ENCODE measurements at regions of chr5 and their contacts with region 1.

Region 1: GRCh38 chr5:96868603-96869371 is 7.5 kb upstream of the ERAP2 start:
- DNase-seq: peak; percentile 42 to 68 (median 59)
- H3K4me3 ChIP-seq: no peak overlapping the region
- H3K4me3 Mint-ChIP-seq: no peak overlapping the region
- H3K27ac ChIP-seq: no peak overlapping the region
- H3K27ac Mint-ChIP-seq: peak overlapping the region in 2 of 7 donors; percentile 0 to 38
- H3K4me1 ChIP-seq: peaks cover 34% of the 10 kb centered on the region
- H3K4me1 Mint-ChIP-seq: peaks cover 29 to 45% (median 33%) of the 10 kb centered on the region in 4 donors
- H3K27me3 ChIP-seq: no peaks in the 10 kb centered on the region
- H3K27me3 Mint-ChIP-seq: peaks cover 0 to 2% of the 10 kb centered on the region in 2 donors

Region 2: GRCh38 chr5:96837303-96837702 is 31.5 kb before region 1 on chr5:
- CTCF ChIA-PET with region 1: no interaction called
- POLR2A ChIA-PET with region 1: no interaction called
- intact Hi-C with region 1: no loop called
- DNase-seq: no peak
- H3K4me3 ChIP-seq: no peak overlapping the region
- H3K4me3 Mint-ChIP-seq: no peak overlapping the region
- H3K27ac ChIP-seq: no peak overlapping the region
- H3K27ac Mint-ChIP-seq: no peak overlapping the region
- H3K4me1 ChIP-seq: no peaks in the 10 kb centered on the region
- H3K4me1 Mint-ChIP-seq: peaks cover 0 to 2% (median under 1%) of the 10 kb centered on the region in 4 donors
- H3K27me3 ChIP-seq: no peaks in the 10 kb centered on the region
- H3K27me3 Mint-ChIP-seq: peaks cover 0 to 1% of the 10 kb centered on the region in 2 donors

Region 3: DNA sequence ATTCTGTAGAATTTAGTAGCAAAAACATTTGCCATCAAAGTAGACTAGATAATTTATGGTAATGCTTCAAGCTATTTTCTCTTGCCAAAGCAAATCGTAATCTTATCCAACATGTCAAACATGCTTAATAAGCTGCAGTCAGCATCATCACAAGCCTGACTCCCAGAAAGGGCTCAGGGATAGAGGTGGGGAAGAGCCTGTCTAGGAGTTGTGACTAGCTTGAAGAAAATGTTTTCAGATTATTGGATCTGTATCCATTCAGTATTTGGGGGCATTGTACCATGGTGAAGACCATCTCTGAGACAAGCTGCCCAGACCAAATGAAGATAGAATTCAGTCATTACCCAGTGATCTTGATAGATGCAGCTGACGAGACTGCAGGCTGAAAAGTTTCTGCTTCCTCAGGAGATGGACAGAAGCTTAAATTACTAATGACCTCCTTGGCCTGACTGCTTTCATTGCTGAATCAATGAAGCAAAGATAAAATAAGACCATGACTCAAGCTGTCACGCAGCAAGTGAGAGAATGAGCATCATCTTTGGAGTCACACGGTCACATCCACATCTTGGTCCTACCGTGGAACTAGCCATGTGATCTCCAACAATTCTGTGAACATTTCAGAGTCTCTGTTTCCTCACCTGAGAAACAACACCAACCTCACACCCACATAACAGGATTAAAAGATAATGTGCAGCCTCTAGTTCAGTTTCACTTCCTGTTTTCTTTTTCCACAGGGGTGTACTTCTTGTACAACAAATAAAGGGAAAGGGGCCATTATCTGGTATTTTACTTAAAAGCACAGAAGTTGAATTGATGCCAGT is 16.9 kb after region 1 on chr5:
- CTCF ChIA-PET with region 1: interaction called, 39 read pairs
- POLR2A ChIA-PET with region 1: interaction called, 6 read pairs
- intact Hi-C with region 1: loop called (anchors 1 kb)
- DNase-seq: peak; percentile 55 to 79 (median 69)
- H3K4me3 ChIP-seq: peak overlapping the region; percentile 8
- H3K4me3 Mint-ChIP-seq: peak overlapping the region; percentile 55 to 85 (median 70)
- H3K27ac ChIP-seq: peak overlapping the region; percentile 43
- H3K27ac Mint-ChIP-seq: peak overlapping the region; percentile 77 to 98 (median 96)
- H3K4me1 ChIP-seq: peaks cover 61% of the 10 kb centered on the region
- H3K4me1 Mint-ChIP-seq: peaks cover 53 to 75% (median 65%) of the 10 kb centered on the region in 4 donors
- H3K27me3 ChIP-seq: no peaks in the 10 kb centered on the region
- H3K27me3 Mint-ChIP-seq: no peaks in the 10 kb centered on the region

Region 4: DNA sequence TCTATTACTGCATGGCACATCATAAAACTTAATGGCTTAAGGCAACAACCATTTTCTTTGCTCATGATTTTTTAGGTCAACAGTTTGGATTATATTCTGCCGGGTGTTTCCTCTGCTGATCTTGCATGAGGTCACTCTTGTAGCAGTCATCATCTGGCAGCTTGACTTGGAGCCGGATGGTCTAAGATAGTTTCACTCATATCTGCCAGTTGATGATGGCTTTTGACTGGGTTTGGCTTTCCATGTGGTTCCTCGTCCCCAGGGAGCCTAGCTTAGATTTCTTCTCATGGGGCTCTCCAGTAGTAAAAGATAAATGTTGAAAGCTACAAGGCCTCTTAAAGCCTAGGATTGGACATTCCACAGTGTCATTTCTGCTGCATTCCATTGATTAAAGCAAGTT is 94.5 kb after region 1 on chr5:
- CTCF ChIA-PET with region 1: interaction called, 12 read pairs
- POLR2A ChIA-PET with region 1: interaction called, 3 read pairs
- intact Hi-C with region 1: no loop called
- DNase-seq: peak in 2 of 5 donors; percentile 19 to 44
- H3K4me3 ChIP-seq: peak overlapping the region in 1 of 2 donors; percentile 29
- H3K4me3 Mint-ChIP-seq: peak overlapping the region; percentile 33 to 89 (median 80)
- H3K27ac ChIP-seq: peak overlapping the region; percentile 45
- H3K27ac Mint-ChIP-seq: peak overlapping the region; percentile 83 to 97 (median 95)
- H3K4me1 ChIP-seq: peaks cover 88% of the 10 kb centered on the region
- H3K4me1 Mint-ChIP-seq: peaks cover 53 to 89% (median 71%) of the 10 kb centered on the region in 4 donors
- H3K27me3 ChIP-seq: no peaks in the 10 kb centered on the region
- H3K27me3 Mint-ChIP-seq: no peaks in the 10 kb centered on the region

Region 5: GRCh38 chr5:97009212-97009898 is 140.6 kb after region 1 on chr5:
- CTCF ChIA-PET with region 1: interaction called, 11 read pairs
- POLR2A ChIA-PET with region 1: no interaction called
- intact Hi-C with region 1: loop called (anchors 2 kb)
- DNase-seq: peak in 4 of 5 donors; percentile 31 to 47 (median 37)
- H3K4me3 ChIP-seq: no peak overlapping the region
- H3K4me3 Mint-ChIP-seq: peak overlapping the region in 5 of 8 donors; percentile 7 to 66 (median 51)
- H3K27ac ChIP-seq: no peak overlapping the region
- H3K27ac Mint-ChIP-seq: peak overlapping the region in 5 of 7 donors; percentile 23 to 87 (median 66)
- H3K4me1 ChIP-seq: peaks cover 24% of the 10 kb centered on the region
- H3K4me1 Mint-ChIP-seq: peaks cover 17 to 32% (median 26%) of the 10 kb centered on the region in 4 donors
- H3K27me3 ChIP-seq: no peaks in the 10 kb centered on the region
- H3K27me3 Mint-ChIP-seq: no peaks in the 10 kb centered on the region

Region 6: DNA sequence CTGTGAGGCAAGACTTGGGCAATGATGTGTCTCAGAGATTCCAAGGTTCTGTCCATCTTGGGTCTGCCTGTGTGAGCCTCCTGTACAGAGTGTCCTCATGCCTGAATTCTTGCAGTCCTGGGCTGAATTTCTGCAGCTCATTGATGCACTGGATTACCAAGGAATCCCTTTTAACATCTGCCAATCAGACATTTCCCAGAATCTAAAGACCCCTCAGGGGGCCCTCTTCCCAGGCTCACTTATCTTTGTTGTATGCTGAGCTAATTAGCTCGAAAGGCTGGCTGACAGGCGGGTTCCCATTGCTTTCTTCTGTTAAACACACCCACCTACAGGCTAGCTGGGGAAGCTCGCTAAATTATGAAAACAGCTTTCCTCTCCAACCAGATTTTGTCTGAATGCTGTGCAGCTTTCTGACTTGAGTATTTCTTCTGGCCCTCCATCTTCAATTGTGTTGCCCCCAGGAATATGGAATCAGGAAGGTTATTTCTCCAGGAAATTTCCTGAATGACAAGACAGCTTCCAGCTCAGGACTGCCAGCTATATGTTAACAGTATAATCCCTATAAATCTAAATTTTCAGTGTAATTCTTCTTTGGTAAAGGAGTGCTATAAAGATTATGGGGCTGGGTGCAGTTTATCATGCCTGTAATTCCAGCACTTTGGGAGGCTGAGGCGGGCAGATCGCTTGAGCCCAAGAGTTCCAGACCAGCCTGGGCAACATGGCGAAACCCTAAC is 273.9 kb after region 1 on chr5 and contains the start of gene LIX1:
- CTCF ChIA-PET with region 1: interaction called, 27 read pairs
- POLR2A ChIA-PET with region 1: no interaction called
- intact Hi-C with region 1: loop called (anchors 1 kb)
- DNase-seq: peak in 4 of 5 donors; percentile 10 to 21 (median 11)
- H3K4me3 ChIP-seq: no peak within 1 kb of the TSS
- H3K4me3 Mint-ChIP-seq: no peak within 1 kb of the TSS
- H3K27ac ChIP-seq: no peak within 1 kb of the TSS
- H3K27ac Mint-ChIP-seq: peak within 1 kb of the TSS in 1 of 7 donors; percentile 54
- H3K4me1 ChIP-seq: no peaks in the 10 kb centered on the region
- H3K4me1 Mint-ChIP-seq: no peaks in the 10 kb centered on the region
- H3K27me3 ChIP-seq: no peaks in the 10 kb centered on the region
- H3K27me3 Mint-ChIP-seq: peaks cover 5 to 15% of the 10 kb centered on the region in 2 donors
- total RNA-seq, gene LIX1: not detected